PC-9 (cell line): ENCODE measurements at regions of chr5 and their contacts with region 1.

Region 1: DNA sequence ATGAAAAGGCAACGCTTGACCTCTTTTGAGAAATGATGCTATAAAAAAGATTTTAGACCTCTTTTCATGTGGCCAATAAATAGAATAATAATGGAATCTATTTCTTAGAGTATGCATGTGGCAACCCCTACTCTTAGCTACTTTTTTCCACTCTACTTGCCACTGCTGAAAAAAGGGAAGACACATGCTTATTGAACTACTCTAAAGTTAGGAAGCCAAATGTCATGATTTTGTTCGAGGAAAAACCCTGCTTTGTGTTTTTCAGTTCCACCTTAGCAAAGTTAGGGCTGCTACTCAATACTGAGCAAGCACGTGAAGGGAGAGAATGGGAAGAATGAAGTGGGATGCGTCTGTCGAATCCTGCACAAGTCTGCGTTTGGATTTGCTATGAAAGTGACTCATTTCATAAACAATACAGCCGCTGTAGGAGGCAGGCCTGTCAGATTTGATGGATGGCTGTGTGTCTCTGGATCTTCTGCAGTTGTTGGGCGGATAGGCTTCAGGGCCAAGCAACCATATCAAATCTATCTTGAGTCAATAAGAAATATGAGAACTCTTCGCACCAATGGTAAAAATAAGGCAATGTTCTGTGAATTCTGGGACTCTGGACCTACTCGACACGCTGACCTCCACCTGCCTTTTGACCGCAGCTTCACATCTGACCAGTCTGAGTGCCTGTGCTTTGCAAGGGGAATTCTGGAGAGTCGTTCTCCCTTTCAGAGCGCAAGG is 333.6 kb downstream of the PIK3R1 start:
- DNase-seq: peak; percentile 78 to 95
- H3K4me3 ChIP-seq: no peak overlapping the region
- H3K27ac ChIP-seq: peak overlapping the region; percentile 35
- H3K4me1 ChIP-seq: peaks cover 29% of the 10 kb centered on the region
- H3K27me3 ChIP-seq: no peaks in the 10 kb centered on the region
- CTCF ChIP-seq: no peak

Region 2: DNA sequence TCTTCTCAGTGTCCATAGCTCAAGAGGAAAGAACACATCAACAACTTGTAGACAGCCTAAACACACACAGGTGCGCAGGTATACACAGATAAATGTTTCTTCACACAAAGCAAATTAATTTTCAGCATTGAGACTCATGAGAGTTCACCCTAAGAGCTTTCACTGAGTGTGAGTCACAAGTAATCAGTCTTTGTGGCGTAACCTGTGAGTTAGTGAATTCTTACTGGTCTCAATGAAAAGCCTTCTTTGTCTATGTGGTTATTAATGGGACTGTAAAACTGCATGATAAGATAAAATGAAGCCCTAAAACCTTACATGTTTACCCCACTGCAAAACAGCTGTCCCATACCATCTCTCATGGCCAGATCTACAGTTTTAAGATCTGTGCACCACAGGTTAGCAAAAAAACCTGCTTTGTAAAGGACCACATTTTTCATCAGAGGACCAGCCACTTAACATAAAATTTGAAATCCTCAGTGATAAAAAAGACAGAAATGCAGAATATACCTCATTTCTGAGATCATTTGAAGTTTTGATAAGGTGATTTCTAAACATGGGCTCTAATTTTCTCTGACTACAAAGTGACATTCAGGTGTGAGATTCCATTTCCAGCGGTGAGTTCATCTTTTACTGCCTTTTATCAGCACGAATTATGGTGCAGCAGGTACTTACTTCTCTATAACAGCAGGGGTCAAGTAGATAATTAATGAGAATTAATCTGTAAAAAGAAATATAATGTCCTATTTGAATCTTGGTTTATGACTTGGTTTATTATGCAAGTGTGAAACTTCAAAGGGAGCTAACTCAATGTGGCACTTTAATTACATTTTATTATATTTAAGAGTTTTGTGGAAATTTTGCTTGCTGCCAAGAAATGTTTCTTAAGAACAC is 669.3 kb before region 1 on chr5:
- CTCF ChIA-PET with region 1: no interaction called
- POLR2A ChIA-PET with region 1: no interaction called
- intact Hi-C with region 1: no loop called
- DNase-seq: peak in 1 of 2 experiments; percentile 43
- H3K4me3 ChIP-seq: no peak overlapping the region
- H3K27ac ChIP-seq: no peak overlapping the region
- H3K4me1 ChIP-seq: no peaks in the 10 kb centered on the region
- H3K27me3 ChIP-seq: no peaks in the 10 kb centered on the region
- CTCF ChIP-seq: no peak

Region 3: DNA sequence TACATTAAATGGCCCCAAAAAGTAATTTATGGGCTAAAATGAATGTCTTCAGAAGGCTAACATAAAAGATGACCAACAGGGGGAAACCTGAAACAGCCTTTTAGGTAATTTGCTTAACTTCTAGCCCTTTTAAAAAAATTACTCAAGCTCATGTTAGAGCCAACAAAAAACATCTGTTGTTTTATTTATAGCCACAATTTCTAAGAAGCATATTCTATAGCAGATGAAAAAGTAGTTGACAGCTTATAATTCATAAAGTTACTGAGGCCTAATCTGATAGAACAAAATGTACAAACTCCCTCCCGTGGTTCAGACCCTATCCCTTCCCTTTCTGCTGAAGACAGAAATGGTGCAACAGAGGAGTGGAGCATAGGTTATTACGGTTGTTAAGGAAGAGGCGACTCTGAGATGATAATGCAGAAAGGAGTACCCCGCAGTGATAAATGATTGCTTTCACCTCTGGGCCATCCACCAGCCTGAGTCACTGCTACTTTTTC is 287.5 kb before region 1 on chr5:
- CTCF ChIA-PET with region 1: no interaction called
- POLR2A ChIA-PET with region 1: no interaction called
- intact Hi-C with region 1: no loop called
- DNase-seq: no peak
- H3K4me3 ChIP-seq: no peak overlapping the region
- H3K27ac ChIP-seq: no peak overlapping the region
- H3K4me1 ChIP-seq: no peaks in the 10 kb centered on the region
- H3K27me3 ChIP-seq: no peaks in the 10 kb centered on the region
- CTCF ChIP-seq: no peak

Region 4: GRCh38 chr5:68683632-68684036 is 134.5 kb after region 1 on chr5:
- CTCF ChIA-PET with region 1: no interaction called
- POLR2A ChIA-PET with region 1: no interaction called
- intact Hi-C with region 1: loop called (anchors 10 kb)
- DNase-seq: peak; percentile 77 to 97
- H3K4me3 ChIP-seq: no peak overlapping the region
- H3K27ac ChIP-seq: peak overlapping the region; percentile 42
- H3K4me1 ChIP-seq: peaks cover 31% of the 10 kb centered on the region
- H3K27me3 ChIP-seq: no peaks in the 10 kb centered on the region
- CTCF ChIP-seq: no peak